Activated CD4-positive, alpha-beta memory T cell treated with anti-CD3 and anti-CD28 coated beads, Interleukin-2, amount 10 ng/mL, durations not matched to agents 7 days and 5 days (primary cell): ENCODE measurements at regions of chr12 and their contacts with region 1.

Region 1: GRCh38 chr12:4276524-4277204 is 3.1 kb downstream of the CCND2 start:
- DNase-seq: peak; percentile 89
- H3K4me3 Mint-ChIP-seq: peak overlapping the region; percentile 97
- H3K27ac Mint-ChIP-seq: peak overlapping the region; percentile 100
- H3K4me1 Mint-ChIP-seq: peaks cover 65% of the 10 kb centered on the region
- H3K27me3 Mint-ChIP-seq: no peaks in the 10 kb centered on the region

Region 2: GRCh38 chr12:3964439-3964838 is 312.2 kb before region 1 on chr12:
- CTCF ChIA-PET with region 1: interaction called, 19 read pairs
- POLR2A ChIA-PET with region 1: interaction called, 4 read pairs
- DNase-seq: no peak
- H3K4me3 Mint-ChIP-seq: no peak overlapping the region
- H3K27ac Mint-ChIP-seq: no peak overlapping the region
- H3K4me1 Mint-ChIP-seq: peaks cover 19% of the 10 kb centered on the region
- H3K27me3 Mint-ChIP-seq: no peaks in the 10 kb centered on the region

Region 3: DNA sequence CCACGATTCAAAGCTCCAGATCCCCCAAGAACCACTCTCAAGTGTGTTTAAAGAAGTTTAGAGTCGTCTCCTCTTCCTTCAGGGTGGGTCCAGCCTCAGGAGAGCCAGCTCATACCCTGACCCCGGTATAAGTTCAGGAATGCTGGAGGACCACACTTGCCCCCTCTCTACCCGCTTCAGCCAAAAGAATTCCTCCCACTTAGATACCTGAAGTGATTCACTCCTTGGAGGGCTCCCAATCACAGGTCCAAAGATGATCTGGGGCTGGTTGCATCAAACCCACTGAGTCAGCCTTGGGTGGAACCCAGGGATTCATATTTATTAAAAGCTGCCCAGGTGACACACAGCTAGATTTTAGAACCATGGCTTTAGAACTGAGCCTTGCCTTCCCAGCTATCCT is 269.9 kb before region 1 on chr12:
- CTCF ChIA-PET with region 1: interaction called, 120 read pairs
- POLR2A ChIA-PET with region 1: no interaction called
- DNase-seq: no peak
- H3K4me3 Mint-ChIP-seq: no peak overlapping the region
- H3K27ac Mint-ChIP-seq: no peak overlapping the region
- H3K4me1 Mint-ChIP-seq: peaks cover 1% of the 10 kb centered on the region
- H3K27me3 Mint-ChIP-seq: no peaks in the 10 kb centered on the region

Region 4: GRCh38 chr12:4148418-4149056 is 128.1 kb before region 1 on chr12:
- CTCF ChIA-PET with region 1: interaction called, 190 read pairs
- POLR2A ChIA-PET with region 1: interaction called, 422 read pairs
- DNase-seq: peak; percentile 50
- H3K4me3 Mint-ChIP-seq: no peak overlapping the region
- H3K27ac Mint-ChIP-seq: peak overlapping the region; percentile 84
- H3K4me1 Mint-ChIP-seq: peaks cover 93% of the 10 kb centered on the region
- H3K27me3 Mint-ChIP-seq: no peaks in the 10 kb centered on the region

Region 5: DNA sequence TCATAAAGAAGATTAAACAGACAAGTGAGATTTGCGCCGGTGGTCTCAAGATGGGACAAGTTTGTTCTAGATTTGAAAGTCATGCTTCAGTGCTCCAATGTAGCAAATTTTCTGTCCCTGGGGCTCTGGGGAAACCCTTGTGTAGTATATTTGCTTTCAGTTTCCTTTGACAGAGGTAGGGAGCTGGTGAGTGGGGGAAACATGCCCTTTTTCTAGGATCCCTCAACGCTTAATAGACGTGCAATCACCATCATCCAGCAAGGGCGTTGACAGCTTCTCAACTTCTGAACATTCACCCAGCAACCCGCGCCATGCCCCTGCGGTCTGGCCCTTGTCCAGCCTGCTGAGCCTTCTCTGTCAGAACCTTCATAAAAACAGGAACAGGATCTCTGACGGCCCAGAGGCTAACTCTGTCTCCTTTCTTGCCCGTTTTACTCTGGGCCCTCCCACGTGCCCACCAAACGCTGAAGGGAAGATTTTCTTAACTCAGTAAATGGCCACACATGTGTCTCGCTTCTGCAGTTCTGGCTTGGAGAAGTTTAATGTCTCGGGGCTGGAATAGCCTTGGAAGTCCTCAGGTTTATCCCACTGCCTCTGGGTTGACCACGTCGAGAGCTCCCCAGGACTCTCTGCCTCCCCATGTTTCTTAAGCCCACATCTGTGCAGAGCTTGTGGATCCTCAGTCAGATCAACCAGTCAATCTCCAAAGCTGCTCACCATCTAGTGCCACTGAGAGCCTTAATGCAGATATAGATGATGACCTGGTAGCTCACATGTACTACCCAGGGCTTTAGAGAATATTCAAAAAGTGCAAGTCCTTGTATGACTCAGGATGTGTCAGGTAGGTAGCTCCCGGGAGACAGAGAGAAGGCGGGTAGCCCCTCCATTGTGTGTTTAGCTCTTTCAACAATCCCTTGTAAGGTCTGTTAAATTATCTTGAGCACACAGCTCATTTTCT is 61.2 kb before region 1 on chr12:
- CTCF ChIA-PET with region 1: interaction called, 8 read pairs
- POLR2A ChIA-PET with region 1: interaction called, 21 read pairs
- DNase-seq: peak; percentile 24
- H3K4me3 Mint-ChIP-seq: peak overlapping the region; percentile 59
- H3K27ac Mint-ChIP-seq: peak overlapping the region; percentile 59
- H3K4me1 Mint-ChIP-seq: peaks cover 45% of the 10 kb centered on the region
- H3K27me3 Mint-ChIP-seq: peaks cover 4% of the 10 kb centered on the region

Region 6: GRCh38 chr12:4379405-4379804 is 102.7 kb after region 1 on chr12 and contains the start of gene FGF23:
- CTCF ChIA-PET with region 1: no interaction called
- POLR2A ChIA-PET with region 1: no interaction called
- DNase-seq: no peak
- H3K4me3 Mint-ChIP-seq: no peak within 1 kb of the TSS
- H3K27ac Mint-ChIP-seq: no peak within 1 kb of the TSS
- H3K4me1 Mint-ChIP-seq: no peaks in the 10 kb centered on the region
- H3K27me3 Mint-ChIP-seq: peaks cover 37% of the 10 kb centered on the region
- total RNA-seq, gene FGF23: not detected